Heart left ventricle (tissue), 16 donors: ENCODE measurements at regions of chr15 and their contacts with region 1.

Region 1: DNA sequence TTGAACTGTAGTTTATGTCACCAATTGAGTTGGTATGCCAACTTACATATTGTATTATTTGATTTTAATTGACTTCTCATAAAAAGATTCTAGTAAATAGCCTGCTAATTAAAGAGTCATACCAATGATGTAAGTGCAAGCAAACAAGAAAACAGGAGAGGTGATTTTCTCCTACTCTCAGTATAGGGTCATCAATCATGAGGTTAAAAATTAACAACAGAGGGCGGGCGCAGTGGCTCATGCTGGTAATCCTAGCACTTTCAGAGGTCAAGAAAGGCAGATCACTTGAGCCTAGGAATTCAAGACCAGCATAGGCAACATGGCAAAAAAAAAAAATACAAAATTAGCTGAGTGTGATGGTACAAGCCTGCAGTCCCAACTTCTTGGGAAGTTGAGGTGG is 108.7 kb downstream of the MYO9A start:
- DNase-seq: no peak
- ATAC-seq: no peak
- H3K4me3 ChIP-seq: no peak overlapping the region
- H3K27ac ChIP-seq: no peak overlapping the region
- H3K4me1 ChIP-seq: no peaks in the 10 kb centered on the region
- H3K27me3 ChIP-seq: no peaks in the 10 kb centered on the region
- CTCF ChIP-seq: no peak
- POLR2A ChIP-seq: no peak

Region 2: DNA sequence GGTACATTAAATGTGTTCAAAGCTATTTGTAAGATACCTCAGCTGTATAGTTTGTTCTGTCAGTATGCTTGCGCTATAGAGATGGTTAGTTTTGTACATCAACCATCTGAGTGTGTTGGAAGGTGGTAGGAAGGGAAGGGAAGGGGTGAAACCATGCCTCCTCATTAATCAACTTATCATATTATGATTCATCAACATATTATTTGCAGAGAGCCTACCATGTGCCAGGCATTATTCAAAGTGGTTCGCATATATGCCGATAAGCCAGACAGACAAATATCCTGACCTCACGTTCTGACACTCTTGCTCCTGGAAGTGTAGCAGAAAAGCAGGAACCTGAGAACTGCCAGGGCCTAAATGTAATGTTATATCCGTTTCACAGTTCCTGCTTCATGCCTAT is 447.0 kb before region 1 on chr15:
- intact Hi-C with region 1: loop called in 1 of 10 experiments (anchors 5 kb)
- DNase-seq: no peak
- ATAC-seq: no peak
- H3K4me3 ChIP-seq: no peak overlapping the region
- H3K27ac ChIP-seq: no peak overlapping the region
- H3K4me1 ChIP-seq: peaks cover 0 to 20% (median 6%) of the 10 kb centered on the region in 12 donors
- H3K27me3 ChIP-seq: no peaks in the 10 kb centered on the region
- CTCF ChIP-seq: no peak
- POLR2A ChIP-seq: no peak

Region 3: DNA sequence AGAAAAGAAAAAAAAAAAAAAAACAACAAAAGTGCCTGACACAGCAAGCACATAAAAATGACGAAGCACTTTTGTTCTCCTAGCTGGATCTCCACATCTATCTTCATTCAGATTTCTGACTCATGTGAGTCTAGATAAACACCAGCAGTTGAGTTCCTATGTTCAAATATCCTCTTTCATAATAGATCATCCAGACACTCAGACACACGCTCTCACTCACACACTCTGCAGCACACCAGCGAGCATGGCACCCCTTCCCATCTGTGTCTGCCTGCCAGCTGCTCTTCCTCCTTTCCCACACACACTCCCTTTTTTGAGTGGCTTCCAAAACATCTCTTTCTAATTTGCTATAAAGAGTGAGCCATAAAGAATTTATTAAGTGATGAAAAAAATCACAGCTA is 330.6 kb after region 1 on chr15:
- intact Hi-C with region 1: no loop called
- DNase-seq: no peak
- ATAC-seq: peak in 2 of 4 donors; percentile 55 to 56
- H3K4me3 ChIP-seq: no peak overlapping the region
- H3K27ac ChIP-seq: peak overlapping the region in 2 of 12 donors; percentile 53 to 69
- H3K4me1 ChIP-seq: peaks cover 0 to 21% (median 0%) of the 10 kb centered on the region in 12 donors
- H3K27me3 ChIP-seq: no peaks in the 10 kb centered on the region
- CTCF ChIP-seq: no peak
- POLR2A ChIP-seq: no peak